GM12878 (cell line): ENCODE measurements at regions of chr4 and their contacts with region 1.

Region 1: GRCh38 chr4:60857130-60857753 is 342.9 kb upstream of the ADGRL3 start:
- DNase-seq: no peak
- ATAC-seq: no peak
- H3K4me3 ChIP-seq: no peak overlapping the region
- H3K27ac ChIP-seq: no peak overlapping the region
- H3K4me1 ChIP-seq: no peaks in the 10 kb centered on the region
- H3K27me3 ChIP-seq: no peaks in the 10 kb centered on the region
- CTCF ChIP-seq: no peak
- EP300 ChIP-seq: no peak
- POLR2A ChIP-seq: no peak
- RAD21 ChIP-seq: no peak

Region 2: GRCh38 chr4:60619531-60620305 is 237.5 kb before region 1 on chr4:
- CTCF ChIA-PET with region 1: no interaction called
- POLR2A ChIA-PET with region 1: interaction called, 10 read pairs
- RAD21 ChIA-PET with region 1: no interaction called
- SMC1A ChIA-PET with region 1: no interaction called
- in situ Hi-C with region 1: no loop called
- intact Hi-C with region 1: no loop called
- DNase-seq: no peak
- ATAC-seq: no peak
- H3K4me3 ChIP-seq: no peak overlapping the region
- H3K27ac ChIP-seq: no peak overlapping the region
- H3K4me1 ChIP-seq: no peaks in the 10 kb centered on the region
- H3K27me3 ChIP-seq: no peaks in the 10 kb centered on the region
- CTCF ChIP-seq: no peak
- EP300 ChIP-seq: no peak
- POLR2A ChIP-seq: no peak
- RAD21 ChIP-seq: no peak